AG04449 (cell line): ENCODE measurements at regions of chr17 and their contacts with region 1.

Region 1: DNA sequence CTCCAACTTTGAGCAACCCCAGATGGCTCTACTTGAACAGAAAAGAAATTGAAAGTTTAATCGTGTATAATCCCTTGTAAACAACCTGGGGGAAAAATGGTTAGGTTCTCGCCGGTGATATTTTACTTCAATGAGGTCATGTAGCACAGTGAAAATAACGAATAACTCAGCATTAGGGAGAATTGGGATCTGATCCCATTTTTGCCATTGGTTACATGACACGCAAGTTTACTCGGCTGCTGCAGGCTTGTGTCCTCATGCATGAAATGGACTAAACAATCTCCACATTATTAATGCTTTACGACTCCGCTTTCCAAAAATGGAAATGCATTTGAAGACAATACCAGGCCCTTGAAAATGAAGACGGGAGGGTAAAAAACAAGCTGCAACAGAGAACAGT is 45.5 kb upstream of the LRRC37A3 start:
- DNase-seq: no peak
- H3K4me3 ChIP-seq: no peak overlapping the region
- CTCF ChIP-seq: no peak

Region 2: GRCh38 chr17:64773836-64774761 is 190.7 kb before region 1 on chr17:
- CTCF ChIA-PET with region 1: interaction called, 37 read pairs
- POLR2A ChIA-PET with region 1: no interaction called
- DNase-seq: no peak
- H3K4me3 ChIP-seq: no peak overlapping the region
- CTCF ChIP-seq: peak; percentile 73

Region 3: GRCh38 chr17:64920026-64920418 is 44.8 kb before region 1 on chr17:
- CTCF ChIA-PET with region 1: interaction called, 11 read pairs
- POLR2A ChIA-PET with region 1: interaction called, 4 read pairs
- DNase-seq: no peak
- H3K4me3 ChIP-seq: peak overlapping the region; percentile 64
- CTCF ChIP-seq: no peak

Region 4: DNA sequence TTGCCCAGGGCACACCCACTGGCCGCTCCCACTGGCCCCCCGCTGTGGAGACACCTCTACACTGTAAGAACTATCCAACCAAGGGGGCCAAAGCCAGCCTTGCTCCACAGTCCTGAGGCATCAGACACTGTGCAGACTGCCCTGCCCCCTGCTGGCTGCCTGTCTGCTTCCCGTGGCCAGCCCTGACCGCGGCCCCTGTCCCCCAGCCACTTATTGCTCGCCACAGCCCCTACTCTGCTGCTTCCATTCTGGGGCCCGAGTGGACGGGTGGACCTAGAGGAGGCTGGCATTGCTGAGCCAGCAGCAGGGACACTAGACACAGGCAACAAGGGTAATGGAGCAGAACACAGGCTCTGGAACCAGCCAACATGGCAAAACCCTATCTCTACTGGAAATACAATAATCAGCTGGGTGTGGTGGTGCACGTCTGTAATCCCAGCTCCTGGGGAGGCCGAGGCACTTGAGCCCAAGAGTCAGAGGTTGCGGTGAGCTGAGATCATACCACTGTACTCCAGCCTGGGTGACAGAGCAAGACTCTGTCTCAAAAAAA is 25.8 kb before region 1 on chr17:
- CTCF ChIA-PET with region 1: interaction called, 19 read pairs
- POLR2A ChIA-PET with region 1: no interaction called
- DNase-seq: no peak
- H3K4me3 ChIP-seq: no peak overlapping the region
- CTCF ChIP-seq: peak; percentile 67

Region 5: DNA sequence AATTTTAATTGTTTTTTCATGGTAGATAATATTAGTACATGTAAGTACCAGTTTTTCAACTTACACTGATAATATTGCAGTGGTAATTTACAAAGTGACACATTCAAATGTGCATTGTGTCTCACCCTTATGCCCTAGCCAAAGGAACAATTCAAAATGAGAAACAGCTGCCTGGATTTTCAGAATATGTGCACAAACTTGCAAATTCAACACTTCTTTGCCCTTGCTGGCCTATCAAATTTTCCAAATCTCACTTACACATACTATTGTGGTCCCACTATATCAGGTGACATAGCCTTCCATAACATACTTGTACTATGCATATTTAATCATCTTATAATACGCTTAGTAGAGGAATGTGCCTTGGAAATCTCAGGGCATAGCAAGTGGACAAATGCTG is 12.9 kb before region 1 on chr17:
- CTCF ChIA-PET with region 1: interaction called, 10 read pairs
- POLR2A ChIA-PET with region 1: no interaction called
- DNase-seq: no peak
- H3K4me3 ChIP-seq: no peak overlapping the region
- CTCF ChIP-seq: no peak

Region 6: GRCh38 chr17:64975329-64976087 is 10.7 kb after region 1 on chr17:
- CTCF ChIA-PET with region 1: interaction called, 18 read pairs
- POLR2A ChIA-PET with region 1: no interaction called
- DNase-seq: no peak
- H3K4me3 ChIP-seq: peak overlapping the region; percentile 71
- CTCF ChIP-seq: no peak